Heart left ventricle (tissue), 16 donors: ENCODE measurements at regions of chrX and their contacts with region 1.

Region 1: DNA sequence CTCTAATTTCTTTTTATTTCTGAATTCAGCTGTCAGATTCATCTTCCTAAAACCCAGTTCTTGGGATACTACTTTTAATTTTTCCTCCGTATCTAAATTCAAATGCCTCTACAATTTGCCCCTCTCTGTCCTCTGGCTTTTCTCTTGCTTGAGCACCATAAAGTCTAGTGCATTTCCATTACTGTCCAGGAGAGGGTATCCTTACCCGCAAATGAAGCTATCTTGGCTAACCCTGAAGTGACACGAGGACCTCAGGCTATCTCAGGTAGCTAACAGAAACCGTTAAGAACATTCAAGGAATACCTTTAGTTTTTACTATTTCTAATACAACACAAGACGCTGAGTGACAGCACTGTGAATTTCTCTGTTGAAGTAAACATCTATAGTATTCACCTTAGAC is 49.3 kb upstream of the PRR32 start:
- DNase-seq: no peak
- ATAC-seq: peak in 1 of 4 donors; percentile 48
- H3K4me3 ChIP-seq: no peak overlapping the region
- H3K27ac ChIP-seq: no peak overlapping the region
- H3K4me1 ChIP-seq: no peaks in the 10 kb centered on the region
- H3K27me3 ChIP-seq: no peaks in the 10 kb centered on the region
- CTCF ChIP-seq: peak in 11 of 12 donors; percentile 19 to 54 (median 41)
- POLR2A ChIP-seq: no peak

Region 2: DNA sequence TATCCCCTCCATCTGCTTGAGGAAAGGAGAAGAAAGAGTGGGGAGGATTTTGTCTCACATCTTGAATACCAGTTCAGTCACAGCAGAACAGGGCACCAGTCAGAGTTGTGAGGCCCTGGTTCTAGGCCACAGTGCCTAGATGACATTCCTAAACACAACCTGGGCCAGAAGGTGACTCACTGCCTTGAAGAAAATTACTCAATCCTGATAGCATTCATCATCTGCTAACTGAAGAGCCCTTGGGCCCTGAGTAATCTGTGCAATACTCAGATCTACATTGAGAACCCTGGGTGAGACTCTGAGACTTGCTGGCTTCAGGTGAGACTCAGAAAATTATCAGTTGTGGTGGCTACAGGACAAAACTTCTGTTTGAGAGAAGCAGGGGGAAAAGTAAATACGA is 28.9 kb after region 1 on chrX:
- intact Hi-C with region 1: no loop called
- DNase-seq: no peak
- ATAC-seq: no peak
- H3K4me3 ChIP-seq: no peak overlapping the region
- H3K27ac ChIP-seq: no peak overlapping the region
- H3K4me1 ChIP-seq: no peaks in the 10 kb centered on the region
- H3K27me3 ChIP-seq: no peaks in the 10 kb centered on the region
- CTCF ChIP-seq: no peak
- POLR2A ChIP-seq: no peak

Region 3: GRCh38 chrX:127038065-127038464 is 267.9 kb after region 1 on chrX:
- intact Hi-C with region 1: loop called in 8 of 10 experiments (anchors 2 to 10 kb)
- DNase-seq: no peak
- ATAC-seq: no peak
- H3K4me3 ChIP-seq: no peak overlapping the region
- H3K27ac ChIP-seq: no peak overlapping the region
- H3K4me1 ChIP-seq: no peaks in the 10 kb centered on the region
- H3K27me3 ChIP-seq: no peaks in the 10 kb centered on the region
- CTCF ChIP-seq: peak in 11 of 12 donors; percentile 10 to 40 (median 32)
- POLR2A ChIP-seq: no peak